Prostate gland (tissue), 2 donors: ENCODE measurements at regions of chr1 and their contacts with region 1.

Region 1: DNA sequence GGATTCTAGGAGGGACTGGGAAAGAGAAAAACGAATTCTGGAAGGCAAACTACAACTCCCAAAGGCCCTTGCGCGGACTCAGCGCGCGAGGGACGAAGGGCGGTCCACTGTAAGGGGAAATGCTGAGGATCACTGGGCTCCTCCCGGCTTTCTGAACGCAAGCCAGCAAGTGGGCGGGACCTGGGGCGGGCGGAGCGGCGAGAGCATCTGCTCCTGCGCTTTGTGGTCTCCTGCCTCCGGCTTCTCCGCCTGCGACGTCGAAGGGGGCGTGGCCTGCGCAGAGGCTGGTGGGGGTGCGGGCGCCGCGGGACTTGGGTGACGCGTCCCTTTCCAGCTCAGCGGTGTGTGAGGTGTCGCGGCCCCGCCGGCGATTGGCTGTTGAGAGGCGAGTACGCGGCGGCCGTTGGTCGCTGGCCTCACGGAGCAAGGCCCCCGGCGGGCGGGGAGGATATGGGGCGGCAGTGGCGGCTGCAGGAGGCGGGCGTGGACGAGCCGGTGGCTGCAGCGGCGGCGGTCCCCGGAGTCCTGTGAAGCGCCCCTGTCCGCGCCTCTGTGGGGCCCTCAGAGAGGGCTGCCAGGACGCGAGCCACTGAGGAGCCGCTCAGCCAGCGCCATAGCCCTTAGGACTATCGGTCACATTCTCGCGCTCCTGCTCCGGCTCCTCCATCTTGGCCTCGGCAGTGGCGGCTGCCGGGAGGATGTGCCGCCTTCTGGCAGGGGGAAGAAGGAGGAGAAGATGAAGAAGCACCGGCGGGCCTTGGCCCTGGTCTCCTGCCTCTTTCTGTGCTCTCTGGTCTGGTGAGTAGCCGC is at the start of gene SUCO:
- DNase-seq: peak; percentile 100
- H3K4me3 ChIP-seq: peak within 1 kb of the TSS; percentile 86 to 94
- H3K27ac ChIP-seq: peak within 1 kb of the TSS; percentile 98 to 99
- H3K4me1 ChIP-seq: no peaks in the 10 kb centered on the region
- H3K27me3 ChIP-seq: no peaks in the 10 kb centered on the region
- CTCF ChIP-seq: peak in 1 of 4 experiments; percentile 32
- POLR2A ChIP-seq: peak; percentile 99
- total RNA-seq, gene SUCO: 39.5 to 84.9 TPM

Region 2: GRCh38 chr1:172449585-172450534 is 83.0 kb before region 1 on chr1:
- intact Hi-C with region 1: loop called (anchors 5 kb)
- DNase-seq: no peak
- H3K4me3 ChIP-seq: no peak overlapping the region
- H3K27ac ChIP-seq: no peak overlapping the region
- H3K4me1 ChIP-seq: no peaks in the 10 kb centered on the region
- H3K27me3 ChIP-seq: no peaks in the 10 kb centered on the region
- CTCF ChIP-seq: peak; percentile 48 to 78 (median 73)
- POLR2A ChIP-seq: no peak

Region 3: GRCh38 chr1:172727956-172728603 is 195.2 kb after region 1 on chr1:
- intact Hi-C with region 1: no loop called
- DNase-seq: no peak
- H3K4me3 ChIP-seq: no peak overlapping the region
- H3K27ac ChIP-seq: no peak overlapping the region
- H3K4me1 ChIP-seq: no peaks in the 10 kb centered on the region
- H3K27me3 ChIP-seq: no peaks in the 10 kb centered on the region
- CTCF ChIP-seq: peak in 2 of 4 experiments; percentile 12 to 19
- POLR2A ChIP-seq: no peak

Region 4: DNA sequence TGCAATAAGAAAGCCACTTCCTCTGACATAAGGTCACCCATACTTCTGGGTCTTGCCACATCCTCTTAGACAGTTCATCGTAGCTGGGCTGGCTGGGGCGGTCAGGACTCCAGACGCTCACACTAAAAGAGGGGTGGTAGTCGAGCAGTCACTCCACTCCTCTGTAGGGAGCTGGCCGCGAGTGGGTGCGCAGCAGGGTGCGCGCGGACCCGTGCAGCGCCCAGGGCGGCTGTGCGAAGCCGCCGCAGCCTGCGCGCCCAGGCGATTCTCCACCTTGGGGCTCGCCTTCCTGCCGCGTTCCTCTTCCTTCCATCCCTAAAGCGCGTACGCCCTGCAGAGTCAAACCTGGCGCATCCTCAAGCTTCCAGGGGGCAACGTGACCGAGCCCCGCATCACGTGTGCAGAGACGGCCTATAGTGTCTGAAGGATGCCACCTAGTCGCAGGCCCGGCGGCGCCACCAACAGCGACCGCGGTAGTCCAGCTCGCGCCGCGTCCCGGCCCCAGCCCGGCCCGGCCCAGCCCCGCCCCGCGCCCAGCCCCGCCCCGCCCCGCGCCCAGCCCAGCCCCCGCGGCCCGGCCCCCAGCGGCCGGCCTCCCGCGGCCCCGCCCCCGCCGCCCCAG is 943.9 kb after region 1 on chr1:
- intact Hi-C with region 1: loop called (anchors 10 kb)
- DNase-seq: peak; percentile 96
- H3K4me3 ChIP-seq: peak overlapping the region; percentile 88 to 97
- H3K27ac ChIP-seq: peak overlapping the region; percentile 99
- H3K4me1 ChIP-seq: peaks cover 11% of the 10 kb centered on the region
- H3K27me3 ChIP-seq: no peaks in the 10 kb centered on the region
- CTCF ChIP-seq: peak in 2 of 4 experiments; percentile 13 to 24
- POLR2A ChIP-seq: peak; percentile 68

Region 5: GRCh38 chr1:173669491-173669941 is 1136.6 kb after region 1 on chr1 and contains the start of gene ANKRD45:
- intact Hi-C with region 1: no loop called
- DNase-seq: peak; percentile 13
- H3K4me3 ChIP-seq: peak within 1 kb of the TSS; percentile 8 to 42
- H3K27ac ChIP-seq: no peak within 1 kb of the TSS
- H3K4me1 ChIP-seq: no peaks in the 10 kb centered on the region
- H3K27me3 ChIP-seq: no peaks in the 10 kb centered on the region
- CTCF ChIP-seq: no peak
- POLR2A ChIP-seq: no peak
- total RNA-seq, gene ANKRD45: 2.3 TPM in 1 of 2 donors, not detected in the other